CD8-positive, alpha-beta T cell (primary cell): ENCODE measurements at regions of chr5 and their contacts with region 1.

Region 1: DNA sequence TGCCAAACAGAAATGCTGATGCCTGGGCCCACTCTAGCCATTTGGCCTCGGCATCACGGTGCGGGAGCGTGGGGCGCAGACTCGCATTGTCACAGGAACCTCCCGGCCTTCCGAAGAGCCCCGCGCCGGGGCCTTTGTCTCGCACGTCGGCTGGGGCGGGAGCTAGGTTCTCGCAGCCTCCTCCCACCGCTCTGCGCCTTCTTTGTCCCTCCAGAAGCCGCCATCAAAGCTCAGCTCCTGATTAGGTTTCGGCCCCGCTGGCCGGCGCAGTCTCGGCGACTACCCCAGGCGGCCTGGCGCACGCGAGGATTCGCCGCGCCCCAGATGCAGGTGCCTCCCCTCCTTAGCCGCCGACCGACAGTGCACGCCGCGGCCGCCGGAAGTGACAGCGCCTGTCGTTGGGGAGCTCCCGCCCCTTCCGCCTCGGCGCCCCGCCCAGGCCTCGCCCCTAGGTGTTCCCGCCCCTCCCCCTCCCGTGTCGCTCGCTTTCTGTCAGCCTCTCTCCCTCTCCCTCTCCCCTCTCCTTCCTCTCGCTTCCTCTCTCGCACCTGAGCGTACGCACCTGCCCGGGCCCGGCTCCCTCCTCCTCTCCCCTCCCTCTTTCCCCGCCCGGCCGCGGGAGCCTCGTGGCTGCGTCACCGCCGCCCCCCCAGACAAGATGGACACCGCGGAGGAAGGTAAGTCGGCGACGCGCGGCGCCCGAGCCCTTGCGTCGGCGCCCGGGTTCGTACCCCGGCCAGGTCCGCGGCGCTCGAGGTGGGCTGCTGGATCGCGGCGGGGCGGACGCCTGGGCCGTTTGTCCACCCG is at the start of gene MARCHF6:
- DNase-seq: peak; percentile 89 to 98 (median 96)
- ATAC-seq: peak; percentile 89
- H3K4me3 ChIP-seq: peak within 1 kb of the TSS; percentile 83 to 90
- H3K4me3 Mint-ChIP-seq: peak within 1 kb of the TSS; percentile 99
- H3K27ac ChIP-seq: peak within 1 kb of the TSS; percentile 73 to 89
- H3K27ac Mint-ChIP-seq: peak within 1 kb of the TSS; percentile 99
- H3K4me1 ChIP-seq: peaks cover 23% of the 10 kb centered on the region
- H3K4me1 Mint-ChIP-seq: peaks cover 48% of the 10 kb centered on the region
- H3K27me3 ChIP-seq: no peaks in the 10 kb centered on the region
- H3K27me3 Mint-ChIP-seq: no peaks in the 10 kb centered on the region
- CTCF ChIP-seq: no peak
- total RNA-seq, gene MARCHF6: 182 to 189 TPM

Region 2: DNA sequence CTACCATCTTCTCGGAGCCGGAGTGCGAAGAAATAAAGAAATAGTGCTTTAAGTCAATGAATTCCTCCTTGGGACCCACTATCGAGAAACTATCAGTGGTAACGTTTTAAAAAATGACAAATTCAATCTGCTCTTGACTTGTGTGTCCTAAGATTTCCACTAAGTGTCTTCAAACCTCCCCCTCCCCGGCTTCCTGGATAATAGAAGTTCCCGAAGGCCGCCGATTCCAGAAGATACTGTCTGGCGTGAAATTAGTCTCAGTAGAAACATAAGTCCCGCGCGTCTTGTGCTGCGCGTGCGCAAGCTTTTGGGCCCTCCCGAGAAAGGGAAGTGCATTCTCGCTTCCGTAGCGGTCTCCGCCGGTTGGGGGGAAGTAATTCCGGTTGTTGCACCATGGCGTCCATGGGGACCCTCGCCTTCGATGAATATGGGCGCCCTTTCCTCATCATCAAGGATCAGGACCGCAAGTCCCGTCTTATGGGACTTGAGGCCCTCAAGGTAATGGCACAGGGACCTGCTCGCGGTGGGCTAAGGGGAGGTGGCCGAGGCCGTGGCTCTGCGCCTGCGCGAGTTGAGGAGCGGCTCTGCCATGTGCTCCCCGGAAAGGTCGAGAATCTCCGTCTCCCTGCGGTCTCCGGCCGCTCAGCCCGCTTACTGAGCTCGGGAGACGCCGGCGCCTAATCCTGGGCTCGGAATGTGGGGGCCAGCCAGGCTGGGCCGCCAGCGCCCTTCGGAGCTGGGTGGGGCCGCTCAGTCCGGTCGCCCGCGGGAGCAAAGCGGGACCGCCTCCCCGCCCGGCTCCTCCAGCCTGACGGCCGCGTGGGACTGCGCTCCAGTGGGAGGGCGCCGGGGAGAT is 103.3 kb before region 1 on chr5 and contains the start of gene CCT5:
- CTCF ChIA-PET with region 1: interaction called, 3 read pairs
- POLR2A ChIA-PET with region 1: interaction called, 17 read pairs
- intact Hi-C with region 1: loop called in 1 of 2 experiments (anchors 1 kb)
- DNase-seq: peak; percentile 78 to 99 (median 89)
- ATAC-seq: peak; percentile 81
- H3K4me3 ChIP-seq: peak within 1 kb of the TSS; percentile 85 to 99
- H3K4me3 Mint-ChIP-seq: peak within 1 kb of the TSS; percentile 94
- H3K27ac ChIP-seq: peak within 1 kb of the TSS; percentile 91 to 97
- H3K27ac Mint-ChIP-seq: peak within 1 kb of the TSS; percentile 99
- H3K4me1 ChIP-seq: peaks cover 34% of the 10 kb centered on the region
- H3K4me1 Mint-ChIP-seq: peaks cover 49% of the 10 kb centered on the region
- H3K27me3 ChIP-seq: no peaks in the 10 kb centered on the region
- H3K27me3 Mint-ChIP-seq: no peaks in the 10 kb centered on the region
- CTCF ChIP-seq: no peak
- total RNA-seq, gene CCT5: 38.1 to 41.0 TPM

Region 3: GRCh38 chr5:10399839-10400238 is 46.4 kb after region 1 on chr5:
- CTCF ChIA-PET with region 1: no interaction called
- POLR2A ChIA-PET with region 1: interaction called, 3 read pairs
- intact Hi-C with region 1: loop called in 1 of 2 experiments (anchors 5 kb)
- DNase-seq: no peak
- ATAC-seq: no peak
- H3K4me3 ChIP-seq: no peak overlapping the region
- H3K4me3 Mint-ChIP-seq: no peak overlapping the region
- H3K27ac ChIP-seq: no peak overlapping the region
- H3K27ac Mint-ChIP-seq: no peak overlapping the region
- H3K4me1 ChIP-seq: no peaks in the 10 kb centered on the region
- H3K4me1 Mint-ChIP-seq: peaks cover 3% of the 10 kb centered on the region
- H3K27me3 ChIP-seq: no peaks in the 10 kb centered on the region
- H3K27me3 Mint-ChIP-seq: no peaks in the 10 kb centered on the region
- CTCF ChIP-seq: no peak

Region 4: DNA sequence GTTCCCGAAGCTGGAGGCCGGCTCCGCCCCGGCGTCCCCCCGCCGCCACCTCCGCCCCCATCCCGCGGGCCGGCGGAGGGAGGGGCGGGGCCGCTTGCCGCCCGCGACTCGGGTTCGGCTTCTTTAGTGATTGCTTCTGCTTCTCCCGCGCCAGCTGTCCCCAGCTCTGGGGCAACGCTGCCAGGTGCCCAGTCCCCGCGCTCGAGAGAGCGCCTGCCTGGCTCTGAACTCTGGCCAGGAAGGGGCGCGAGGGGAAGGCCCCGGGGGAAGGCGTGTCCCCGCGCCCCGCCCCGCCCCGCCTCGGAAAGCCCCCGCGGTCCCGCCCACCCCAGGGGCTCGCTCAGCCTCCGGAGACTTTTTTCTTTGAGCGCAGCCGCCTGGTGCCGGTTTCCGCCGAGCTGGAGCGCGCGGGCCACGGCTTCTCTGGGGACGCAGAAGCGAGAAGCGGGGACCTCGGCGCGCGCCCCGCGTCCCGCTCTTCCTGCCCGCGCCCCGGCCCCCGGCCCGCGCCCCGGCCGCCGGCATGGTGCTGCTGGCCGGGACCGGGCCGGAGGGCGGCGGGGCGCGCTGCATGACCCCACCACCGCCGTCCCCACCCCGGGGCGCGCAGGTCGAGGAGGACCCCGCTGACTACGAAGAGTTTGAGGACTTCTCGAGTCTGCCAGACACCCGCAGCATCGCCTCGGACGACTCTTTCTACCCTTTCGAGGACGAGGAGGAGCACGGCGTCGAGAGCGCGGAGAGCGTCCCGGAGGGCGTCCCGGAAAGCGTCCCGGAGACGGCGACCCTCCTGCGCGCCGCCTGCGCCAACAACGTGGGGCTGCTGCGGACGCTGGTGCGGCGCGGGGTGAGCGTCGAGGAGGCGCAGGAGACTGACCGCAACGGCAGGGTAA is 210.7 kb after region 1 on chr5 and contains the start of gene ANKRD33B:
- CTCF ChIA-PET with region 1: no interaction called
- POLR2A ChIA-PET with region 1: no interaction called
- intact Hi-C with region 1: loop called in 1 of 2 experiments (anchors 1 kb)
- DNase-seq: peak; percentile 52 to 88 (median 74)
- ATAC-seq: peak; percentile 89
- H3K4me3 ChIP-seq: peak within 1 kb of the TSS; percentile 57 to 70
- H3K4me3 Mint-ChIP-seq: peak within 1 kb of the TSS; percentile 83
- H3K27ac ChIP-seq: no peak within 1 kb of the TSS
- H3K27ac Mint-ChIP-seq: no peak within 1 kb of the TSS
- H3K4me1 ChIP-seq: peaks cover 16% of the 10 kb centered on the region
- H3K4me1 Mint-ChIP-seq: peaks cover 14% of the 10 kb centered on the region
- H3K27me3 ChIP-seq: peaks cover 0 to 12% of the 10 kb centered on the region in 2 experiments
- H3K27me3 Mint-ChIP-seq: peaks cover 7% of the 10 kb centered on the region
- CTCF ChIP-seq: no peak
- total RNA-seq, gene ANKRD33B: 1.3 to 1.4 TPM

Region 5: DNA sequence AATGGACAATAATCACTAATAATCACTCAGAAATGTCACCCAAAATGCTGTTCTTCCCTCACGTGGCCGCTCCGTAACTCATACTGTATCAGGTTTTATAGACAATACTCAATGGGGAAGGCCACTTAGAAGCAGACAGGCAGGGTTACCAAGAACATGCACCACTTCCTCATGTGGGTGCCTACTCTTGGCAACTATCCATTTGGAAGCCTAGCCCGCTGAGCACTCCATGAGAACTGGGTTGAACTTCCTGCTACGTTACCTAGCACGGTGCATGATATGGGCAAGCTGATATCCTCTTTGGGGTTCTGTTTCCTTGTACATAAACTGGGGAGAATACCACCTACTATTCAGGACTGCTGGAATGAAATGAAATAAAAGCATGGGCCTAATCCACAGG is 393.3 kb after region 1 on chr5:
- CTCF ChIA-PET with region 1: no interaction called
- POLR2A ChIA-PET with region 1: no interaction called
- intact Hi-C with region 1: no loop called
- DNase-seq: no peak
- ATAC-seq: no peak
- H3K4me3 ChIP-seq: no peak overlapping the region
- H3K4me3 Mint-ChIP-seq: no peak overlapping the region
- H3K27ac ChIP-seq: no peak overlapping the region
- H3K27ac Mint-ChIP-seq: no peak overlapping the region
- H3K4me1 ChIP-seq: no peaks in the 10 kb centered on the region
- H3K4me1 Mint-ChIP-seq: peaks cover 3% of the 10 kb centered on the region
- H3K27me3 ChIP-seq: no peaks in the 10 kb centered on the region
- H3K27me3 Mint-ChIP-seq: no peaks in the 10 kb centered on the region
- CTCF ChIP-seq: no peak

Region 6: DNA sequence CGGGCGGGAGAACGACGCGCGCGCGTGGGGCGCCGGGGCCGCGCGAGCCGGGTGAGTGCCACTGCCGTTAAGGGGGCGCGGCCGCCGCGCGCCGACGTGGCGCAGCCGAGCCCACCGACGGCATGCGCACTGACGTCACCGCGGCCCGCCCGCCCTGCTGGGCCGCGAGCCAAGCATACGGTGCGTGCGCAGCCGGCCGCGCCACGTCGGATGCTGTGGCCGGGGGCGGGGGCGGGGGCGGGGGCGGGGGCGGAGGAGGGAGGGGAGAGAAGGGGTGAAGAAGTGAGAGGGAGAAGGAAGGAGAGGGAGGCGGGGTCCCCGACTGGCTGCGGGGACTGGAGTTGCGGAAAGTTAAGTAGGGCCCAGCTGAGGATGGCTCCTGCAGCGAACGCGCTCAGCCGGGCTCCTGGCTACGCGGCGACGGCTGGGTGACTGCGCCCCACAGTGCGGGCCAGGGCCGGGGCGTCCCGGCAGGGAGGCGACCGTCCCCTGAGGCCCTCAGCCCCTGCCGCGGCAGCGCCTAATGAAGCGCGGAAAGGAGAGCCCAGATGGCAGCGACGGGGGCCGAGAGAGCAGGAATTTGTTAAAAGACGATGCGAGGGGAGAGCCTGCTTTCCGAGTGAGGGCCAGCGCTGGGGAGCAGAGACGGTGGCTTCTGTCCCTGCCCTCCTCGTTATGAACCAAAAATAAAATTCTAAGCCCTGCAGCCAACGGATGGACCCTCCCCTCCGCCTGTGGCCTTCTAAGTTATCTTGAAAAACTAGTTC is 407.9 kb after region 1 on chr5 and contains the start of gene DAP:
- CTCF ChIA-PET with region 1: no interaction called
- POLR2A ChIA-PET with region 1: interaction called, 4 read pairs
- intact Hi-C with region 1: loop called (anchors 1 to 2 kb)
- DNase-seq: peak; percentile 77 to 98 (median 92)
- ATAC-seq: peak; percentile 86
- H3K4me3 ChIP-seq: peak within 1 kb of the TSS; percentile 56 to 64
- H3K4me3 Mint-ChIP-seq: peak within 1 kb of the TSS; percentile 93
- H3K27ac ChIP-seq: peak within 1 kb of the TSS; percentile 71 to 80
- H3K27ac Mint-ChIP-seq: peak within 1 kb of the TSS; percentile 89
- H3K4me1 ChIP-seq: peaks cover 14% of the 10 kb centered on the region
- H3K4me1 Mint-ChIP-seq: peaks cover 48% of the 10 kb centered on the region
- H3K27me3 ChIP-seq: no peaks in the 10 kb centered on the region
- H3K27me3 Mint-ChIP-seq: no peaks in the 10 kb centered on the region
- CTCF ChIP-seq: no peak
- total RNA-seq, gene DAP: 30.0 to 35.0 TPM